Dorsolateral prefrontal cortex (tissue), 120 donors: ENCODE measurements at regions of chr15 and their contacts with region 1.

Region 1: GRCh38 chr15:76024021-76024768 is 12.0 kb upstream of the NRG4 start:
- DNase-seq: no peak
- H3K4me3 ChIP-seq: no peak overlapping the region
- H3K27ac ChIP-seq: no peak overlapping the region
- H3K27me3 ChIP-seq: peaks cover 0 to 4% (median 0%) of the 10 kb centered on the region in 45 donors
- CTCF ChIP-seq: no peak

Region 2: GRCh38 chr15:76440441-76440840 is 416.2 kb after region 1 on chr15:
- intact Hi-C with region 1: loop called in 1 of 2 experiments (anchors 10 kb)
- DNase-seq: no peak
- H3K4me3 ChIP-seq: no peak overlapping the region
- H3K27ac ChIP-seq: no peak overlapping the region
- H3K27me3 ChIP-seq: no peaks in the 10 kb centered on the region
- CTCF ChIP-seq: no peak